Sigmoid colon (tissue), 7 donors: ENCODE measurements at regions of chr10 and their contacts with region 1.

Region 1: DNA sequence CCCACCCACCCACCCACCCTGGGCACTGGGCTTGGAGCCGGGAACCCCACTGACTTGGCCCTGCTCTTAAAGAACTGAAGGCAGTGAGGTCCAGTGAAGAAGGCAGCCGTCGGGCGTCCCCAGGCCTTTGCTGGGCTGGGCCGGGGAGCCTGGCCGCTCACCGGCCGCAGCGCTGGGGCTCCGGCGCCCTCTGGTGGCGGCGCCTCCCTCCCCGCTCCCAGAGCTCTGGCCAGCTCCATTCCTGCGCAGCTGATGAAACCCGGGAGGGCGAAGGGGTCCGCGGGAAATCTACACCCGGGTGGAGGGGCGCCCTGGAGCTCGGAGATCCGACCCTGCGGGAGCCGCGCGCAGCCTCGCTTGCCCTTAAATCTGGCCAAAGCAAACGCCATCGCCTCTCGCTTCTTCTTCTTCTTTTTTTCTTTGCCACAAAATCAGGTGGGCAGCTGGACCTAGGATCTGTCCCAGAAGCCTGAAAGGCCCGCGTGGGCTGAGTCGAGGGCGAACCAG is 1.7 kb upstream of the CXCL12 start:
- DNase-seq: peak; percentile 81
- H3K4me3 ChIP-seq: no peak overlapping the region
- H3K27ac ChIP-seq: peak overlapping the region in 2 of 4 donors; percentile 68 to 75
- H3K4me1 ChIP-seq: peaks cover 0 to 24% (median 18%) of the 10 kb centered on the region in 4 donors
- H3K27me3 ChIP-seq: peaks cover 2 to 35% (median 27%) of the 10 kb centered on the region in 3 donors
- CTCF ChIP-seq: peak; percentile 67 to 93 (median 76)
- EP300 ChIP-seq: no peak
- POLR2A ChIP-seq: no peak

Region 2: DNA sequence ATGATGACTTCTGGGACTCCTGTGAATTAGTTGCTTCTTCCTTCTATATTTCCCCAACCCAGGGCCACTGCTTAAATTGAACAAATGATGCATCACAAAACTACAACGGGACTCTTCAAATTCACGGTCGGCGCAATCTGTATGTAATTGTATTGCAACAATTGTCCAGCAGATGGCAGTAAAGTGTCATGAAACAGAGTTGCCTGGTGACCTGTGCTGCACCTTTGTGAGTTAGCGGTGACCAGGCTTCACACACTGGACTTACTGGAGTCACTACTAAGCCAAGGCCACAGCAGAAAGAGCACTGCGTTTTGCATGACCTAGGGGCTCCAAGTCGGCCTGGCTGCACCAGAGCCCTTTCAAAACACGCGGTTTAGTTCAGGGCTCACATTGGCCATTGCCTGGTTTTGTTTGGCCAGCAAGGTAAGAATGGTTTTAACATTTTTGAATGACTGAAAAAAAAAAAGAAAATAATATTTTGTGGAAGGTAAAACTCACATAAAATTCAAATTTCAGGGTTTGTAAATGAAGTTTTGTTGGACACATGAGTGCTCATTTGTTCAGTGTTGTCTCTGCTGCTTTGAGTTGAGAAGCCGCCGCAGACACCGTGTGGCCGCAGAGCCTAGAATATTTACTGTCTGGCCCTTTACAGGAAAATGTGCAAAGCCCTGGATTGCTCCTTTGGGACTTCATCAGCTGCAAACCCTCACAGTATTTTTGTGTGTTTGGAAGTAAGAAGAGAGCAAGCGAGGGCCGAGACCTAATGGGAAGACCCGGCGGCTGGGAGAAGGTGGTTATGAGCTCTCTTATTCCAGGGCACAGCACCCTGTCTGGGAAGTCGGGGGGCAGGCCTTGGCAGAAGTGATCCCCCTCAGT is 714.7 kb before region 1 on chr10:
- intact Hi-C with region 1: loop called (anchors 1 kb)
- DNase-seq: peak; percentile 77
- H3K4me3 ChIP-seq: no peak overlapping the region
- H3K27ac ChIP-seq: peak overlapping the region in 1 of 4 donors; percentile 29
- H3K4me1 ChIP-seq: peaks cover 0 to 23% (median 17%) of the 10 kb centered on the region in 4 donors
- H3K27me3 ChIP-seq: peaks cover 0 to 20% (median 10%) of the 10 kb centered on the region in 3 donors
- CTCF ChIP-seq: peak; percentile 74 to 87 (median 82)
- EP300 ChIP-seq: no peak
- POLR2A ChIP-seq: no peak

Region 3: DNA sequence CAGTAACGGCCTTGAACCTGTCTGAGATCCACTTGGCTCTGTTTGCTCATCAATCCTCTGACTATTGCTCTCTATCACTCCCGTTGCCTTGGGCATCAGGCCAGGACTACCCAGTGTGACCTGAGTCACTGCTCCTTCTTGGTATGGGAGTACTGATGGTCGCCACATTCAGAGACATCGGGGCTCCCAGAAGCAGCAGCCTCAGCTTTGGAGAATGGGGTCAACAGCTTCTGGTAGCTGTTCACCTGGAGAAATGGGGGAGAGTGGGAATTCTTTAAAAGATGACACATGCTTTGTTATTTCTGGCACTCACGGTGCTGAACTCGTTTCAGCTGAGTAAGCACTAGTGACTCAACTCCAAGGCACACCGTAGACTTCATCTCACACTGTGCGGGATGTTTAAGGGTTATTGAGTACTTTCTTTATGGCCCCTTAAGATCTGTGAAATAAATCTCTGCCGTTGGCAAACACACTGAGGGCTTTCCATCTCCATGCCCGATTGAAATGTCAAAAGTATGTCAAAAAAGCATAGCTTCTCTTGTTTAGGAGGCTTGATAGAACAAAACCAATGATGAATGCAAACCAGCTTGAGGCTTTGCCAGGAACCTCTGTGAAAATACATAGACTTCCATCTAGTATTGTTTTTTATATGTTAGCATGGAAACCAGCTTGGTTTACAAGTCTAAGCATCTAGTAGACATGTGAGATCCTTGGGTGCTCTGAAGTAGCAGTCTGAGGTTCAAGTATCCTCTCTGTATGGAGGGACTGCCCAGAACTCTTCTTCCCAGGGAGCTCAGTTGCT is 334.8 kb before region 1 on chr10:
- intact Hi-C with region 1: loop called (anchors 10 kb)
- DNase-seq: no peak
- H3K4me3 ChIP-seq: no peak overlapping the region
- H3K27ac ChIP-seq: no peak overlapping the region
- H3K4me1 ChIP-seq: peaks cover 0 to 29% (median 21%) of the 10 kb centered on the region in 4 donors
- H3K27me3 ChIP-seq: no peaks in the 10 kb centered on the region
- CTCF ChIP-seq: no peak
- EP300 ChIP-seq: no peak
- POLR2A ChIP-seq: no peak

Region 4: GRCh38 chr10:44253769-44254462 is 132.7 kb before region 1 on chr10:
- intact Hi-C with region 1: no loop called
- DNase-seq: no peak
- H3K4me3 ChIP-seq: no peak overlapping the region
- H3K27ac ChIP-seq: peak overlapping the region in 1 of 4 donors; percentile 33
- H3K4me1 ChIP-seq: peaks cover 0 to 15% (median 9%) of the 10 kb centered on the region in 4 donors
- H3K27me3 ChIP-seq: no peaks in the 10 kb centered on the region
- CTCF ChIP-seq: no peak
- EP300 ChIP-seq: no peak
- POLR2A ChIP-seq: no peak